Left cardiac atrium (tissue), 4 donors: ENCODE measurements at regions of chr1 and their contacts with region 1.

Region 1: GRCh38 chr1:36411674-36412520 is 14.2 kb upstream of the LSM10 start:
- DNase-seq: no peak
- ATAC-seq: peak; percentile 34 to 53

Region 2: GRCh38 chr1:36342481-36343478 is 69.1 kb before region 1 on chr1:
- intact Hi-C with region 1: loop called in 1 of 2 experiments (anchors 10 kb)
- DNase-seq: no peak
- ATAC-seq: peak; percentile 62 to 67